ENCODE measurements at regions of chr5 and their contacts with region 1.

Region 1: DNA sequence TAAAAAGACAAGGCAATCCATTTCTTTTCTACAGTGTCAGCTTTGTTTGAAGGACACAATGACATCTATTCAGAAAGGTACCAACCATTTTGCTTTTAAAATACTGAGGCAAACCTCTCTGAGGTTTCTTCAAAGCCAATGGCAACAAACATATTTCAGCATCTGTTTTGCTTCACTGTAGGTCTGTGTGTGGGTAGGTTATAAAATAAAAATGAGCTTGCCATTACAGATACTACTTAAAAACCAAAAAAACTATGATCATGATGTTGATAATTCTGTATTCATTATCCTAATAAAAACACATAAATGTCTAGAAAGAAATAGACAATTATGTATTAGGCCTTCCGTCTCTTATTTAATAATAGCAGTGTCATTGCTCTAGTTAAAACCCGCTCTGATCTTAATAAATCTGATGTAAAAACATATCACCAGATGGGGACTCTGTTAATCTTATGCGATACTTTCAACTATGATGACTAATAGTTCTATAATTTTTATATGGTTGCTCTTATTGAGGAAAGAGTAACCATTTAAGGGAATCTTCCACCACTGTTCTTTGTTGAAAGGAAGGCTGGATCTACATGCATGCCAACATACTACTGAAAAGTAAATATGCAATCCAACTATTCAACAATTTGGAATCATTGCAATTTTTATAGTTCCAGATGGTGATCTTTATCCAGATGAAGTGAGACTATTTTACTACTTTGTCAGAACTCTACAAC is 647.2 kb downstream of the PDE4D start:
- DNase-seq: peak; percentile 55
- ATAC-seq: peak; percentile 87
- H3K4me3 ChIP-seq: no peak overlapping the region
- H3K27ac ChIP-seq: peak overlapping the region; percentile 56
- H3K4me1 ChIP-seq: peaks cover 6% of the 10 kb centered on the region; the same call in 1 of the 2 replicates
- H3K27me3 ChIP-seq: no peaks in the 10 kb centered on the region
- CTCF ChIP-seq: no peak

Region 2: GRCh38 chr5:59301693-59302092 is 55.4 kb after region 1 on chr5:
- CTCF ChIA-PET with region 1: no interaction called
- POLR2A ChIA-PET with region 1: no interaction called
- intact Hi-C with region 1: loop called (anchors 2 kb)
- DNase-seq: no peak
- ATAC-seq: no peak
- H3K4me3 ChIP-seq: no peak overlapping the region
- H3K27ac ChIP-seq: no peak overlapping the region
- H3K4me1 ChIP-seq: no peaks in the 10 kb centered on the region
- H3K27me3 ChIP-seq: no peaks in the 10 kb centered on the region
- CTCF ChIP-seq: no peak

Measured in PC-3 (cell line).